ENCODE measurements at regions of chr5 and their contacts with region 1.

Region 1: GRCh38 chr5:159915904-159916840 is at the start of gene ADRA1B:
- DNase-seq: peak; percentile 75
- H3K4me3 Mint-ChIP-seq: peak within 1 kb of the TSS; percentile 60
- H3K27ac Mint-ChIP-seq: no peak within 1 kb of the TSS
- H3K4me1 Mint-ChIP-seq: peaks cover 5% of the 10 kb centered on the region
- H3K27me3 Mint-ChIP-seq: peaks cover 48% of the 10 kb centered on the region
- total RNA-seq, gene ADRA1B: not detected in 2 replicates

Region 2: GRCh38 chr5:159286420-159287035 is 629.6 kb before region 1 on chr5:
- intact Hi-C with region 1: loop called (anchors 10 kb)
- DNase-seq: peak; percentile 70
- H3K4me3 Mint-ChIP-seq: no peak overlapping the region
- H3K27ac Mint-ChIP-seq: no peak overlapping the region
- H3K4me1 Mint-ChIP-seq: no peaks in the 10 kb centered on the region
- H3K27me3 Mint-ChIP-seq: peaks cover under 1% of the 10 kb centered on the region

Region 3: GRCh38 chr5:159444441-159445082 is 471.6 kb before region 1 on chr5:
- intact Hi-C with region 1: loop called (anchors 5 kb)
- DNase-seq: peak; percentile 61
- H3K4me3 Mint-ChIP-seq: no peak overlapping the region
- H3K27ac Mint-ChIP-seq: no peak overlapping the region
- H3K4me1 Mint-ChIP-seq: peaks cover 5% of the 10 kb centered on the region
- H3K27me3 Mint-ChIP-seq: peaks cover 62% of the 10 kb centered on the region

Measured in activated CD4-positive, alpha-beta T cell treated with anti-CD3 and anti-CD28 coated beads, Interleukin-2, amount 10 ng/mL, durations not matched to agents 24 days and 14 days (primary cell).